B cell (primary cell): ENCODE measurements at regions of chr7 and their contacts with region 1.

Region 1: DNA sequence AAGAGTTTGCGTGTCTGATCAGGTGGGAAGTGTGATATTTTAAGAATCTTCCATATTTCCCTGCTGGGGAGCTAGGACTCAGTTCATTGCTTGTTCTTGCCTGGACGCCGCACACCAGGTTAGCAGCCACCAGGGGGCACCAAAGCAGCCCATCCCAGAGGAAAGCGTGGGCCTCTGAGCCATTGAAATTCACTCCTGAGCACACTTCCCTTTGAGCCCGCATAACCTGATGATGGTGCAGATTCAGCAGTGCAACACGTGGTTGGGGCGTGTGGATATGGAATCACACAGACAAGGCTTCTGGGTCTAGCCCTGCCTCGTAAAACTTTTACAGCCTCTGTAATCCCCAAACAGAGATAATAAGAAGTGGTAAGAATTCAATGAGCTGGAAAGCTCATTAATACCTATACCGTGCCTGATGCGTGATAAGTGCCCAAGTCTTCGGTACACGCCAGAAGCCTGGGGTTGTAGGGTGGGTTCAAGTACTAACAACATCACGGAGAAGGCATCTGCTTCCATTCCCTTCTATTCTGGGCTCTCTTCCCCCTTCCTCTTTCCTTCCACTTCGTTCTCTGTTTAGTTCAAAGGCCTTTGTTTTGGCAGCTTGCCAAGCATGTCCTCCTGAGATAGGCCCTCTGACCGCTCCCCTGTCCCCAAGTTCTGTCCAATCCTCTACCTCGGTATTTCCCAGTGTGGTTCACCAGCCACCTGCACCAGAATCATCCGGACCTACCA is 130.1 kb upstream of the KMT2E start:
- DNase-seq: peak; percentile 78
- ATAC-seq: peak; percentile 81
- H3K4me3 ChIP-seq: no peak overlapping the region
- H3K4me3 Mint-ChIP-seq: no peak overlapping the region
- H3K27ac ChIP-seq: no peak overlapping the region
- H3K27ac Mint-ChIP-seq: no peak overlapping the region
- H3K4me1 ChIP-seq: peaks cover 4 to 6% of the 10 kb centered on the region in 2 donors
- H3K4me1 Mint-ChIP-seq: peaks cover 8% of the 10 kb centered on the region
- H3K27me3 ChIP-seq: peaks cover 0 to 9% (median 2%) of the 10 kb centered on the region in 4 experiments
- H3K27me3 Mint-ChIP-seq: peaks cover 12% of the 10 kb centered on the region
- CTCF ChIP-seq: peak; percentile 95

Region 2: GRCh38 chr7:104857458-104858425 is 26.1 kb before region 1 on chr7:
- CTCF ChIA-PET with region 1: interaction called, 13 read pairs
- POLR2A ChIA-PET with region 1: no interaction called
- intact Hi-C with region 1: no loop called
- DNase-seq: no peak
- ATAC-seq: no peak
- H3K4me3 ChIP-seq: no peak overlapping the region
- H3K4me3 Mint-ChIP-seq: no peak overlapping the region
- H3K27ac ChIP-seq: no peak overlapping the region
- H3K27ac Mint-ChIP-seq: no peak overlapping the region
- H3K4me1 ChIP-seq: peaks cover 7 to 13% of the 10 kb centered on the region in 2 donors
- H3K4me1 Mint-ChIP-seq: peaks cover 16% of the 10 kb centered on the region
- H3K27me3 ChIP-seq: peaks cover 0 to 16% (median 5%) of the 10 kb centered on the region in 4 experiments
- H3K27me3 Mint-ChIP-seq: peaks cover 19% of the 10 kb centered on the region
- CTCF ChIP-seq: no peak

Region 3: DNA sequence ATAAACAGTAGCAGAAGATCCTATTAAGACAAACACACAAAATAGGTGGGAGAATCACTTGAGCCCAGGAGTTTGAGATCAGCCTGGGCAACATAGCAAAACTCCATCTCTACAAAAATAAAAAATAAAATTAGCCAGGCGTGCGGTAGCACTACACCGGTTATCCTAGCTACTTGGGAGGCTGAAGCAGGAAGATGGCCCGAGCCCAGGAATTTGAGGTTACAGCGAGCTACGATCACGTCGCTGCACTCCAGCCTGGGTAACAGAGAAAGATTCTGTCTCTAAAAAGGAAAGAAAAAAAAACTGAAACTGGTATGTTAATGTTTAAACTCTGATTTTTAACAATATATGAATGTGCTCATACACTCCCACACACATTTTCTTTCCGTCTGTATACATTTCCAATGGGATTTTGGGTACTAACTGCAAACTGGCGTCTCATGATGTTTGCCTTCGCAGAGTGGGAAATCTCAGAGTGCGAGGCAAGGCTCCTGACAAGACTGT is 10.5 kb before region 1 on chr7:
- CTCF ChIA-PET with region 1: interaction called, 27 read pairs
- POLR2A ChIA-PET with region 1: no interaction called
- intact Hi-C with region 1: no loop called
- DNase-seq: no peak
- ATAC-seq: no peak
- H3K4me3 ChIP-seq: no peak overlapping the region
- H3K4me3 Mint-ChIP-seq: no peak overlapping the region
- H3K27ac ChIP-seq: no peak overlapping the region
- H3K27ac Mint-ChIP-seq: no peak overlapping the region
- H3K4me1 ChIP-seq: no peaks in the 10 kb centered on the region
- H3K4me1 Mint-ChIP-seq: no peaks in the 10 kb centered on the region
- H3K27me3 ChIP-seq: no peaks in the 10 kb centered on the region
- H3K27me3 Mint-ChIP-seq: peaks cover 21% of the 10 kb centered on the region
- CTCF ChIP-seq: no peak

Region 4: DNA sequence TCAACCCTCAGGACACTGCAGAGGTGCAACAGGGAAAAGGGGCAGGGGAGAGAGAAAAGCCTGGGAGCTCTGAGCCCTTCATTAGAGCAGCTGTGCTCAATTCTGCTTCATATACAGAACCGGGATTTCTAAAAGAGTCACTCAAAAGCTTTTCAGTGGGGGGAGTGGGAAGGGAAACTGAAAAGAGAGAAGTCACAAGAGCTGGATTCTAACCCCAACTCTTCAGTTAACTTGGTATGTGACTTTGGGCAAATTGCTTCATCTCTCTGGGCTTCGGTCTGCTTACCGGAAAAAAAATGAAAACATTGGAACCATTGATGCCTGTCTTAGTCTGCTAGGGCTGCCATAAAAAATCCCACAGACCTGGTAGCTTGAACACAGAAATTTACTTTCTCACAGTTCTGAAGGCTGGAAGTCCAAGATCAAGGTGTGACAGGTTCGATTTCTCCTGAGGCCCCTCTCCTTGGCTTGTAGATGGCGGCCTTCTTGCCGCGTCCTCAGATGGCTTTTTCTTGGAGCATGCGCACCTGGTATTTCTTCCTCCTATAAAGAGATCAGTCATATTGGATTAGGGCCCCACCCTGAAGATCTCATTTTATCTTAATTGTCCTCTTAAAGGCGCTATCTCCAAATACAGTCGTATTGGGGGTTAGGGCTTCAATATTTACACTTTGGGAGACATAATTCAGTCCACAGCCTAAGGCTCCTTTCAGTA is 11.8 kb after region 1 on chr7:
- CTCF ChIA-PET with region 1: interaction called, 28 read pairs
- POLR2A ChIA-PET with region 1: no interaction called
- intact Hi-C with region 1: no loop called
- DNase-seq: no peak
- ATAC-seq: no peak
- H3K4me3 ChIP-seq: no peak overlapping the region
- H3K4me3 Mint-ChIP-seq: no peak overlapping the region
- H3K27ac ChIP-seq: no peak overlapping the region
- H3K27ac Mint-ChIP-seq: no peak overlapping the region
- H3K4me1 ChIP-seq: no peaks in the 10 kb centered on the region
- H3K4me1 Mint-ChIP-seq: peaks cover 1% of the 10 kb centered on the region
- H3K27me3 ChIP-seq: peaks cover 0 to 2% (median 0%) of the 10 kb centered on the region in 4 experiments
- H3K27me3 Mint-ChIP-seq: peaks cover 8% of the 10 kb centered on the region
- CTCF ChIP-seq: no peak

Region 5: GRCh38 chr7:104900525-104901239 is 16.8 kb after region 1 on chr7:
- CTCF ChIA-PET with region 1: interaction called, 28 read pairs
- POLR2A ChIA-PET with region 1: no interaction called
- intact Hi-C with region 1: no loop called
- DNase-seq: no peak
- ATAC-seq: no peak
- H3K4me3 ChIP-seq: no peak overlapping the region
- H3K4me3 Mint-ChIP-seq: no peak overlapping the region
- H3K27ac ChIP-seq: no peak overlapping the region
- H3K27ac Mint-ChIP-seq: no peak overlapping the region
- H3K4me1 ChIP-seq: no peaks in the 10 kb centered on the region
- H3K4me1 Mint-ChIP-seq: peaks cover 1% of the 10 kb centered on the region
- H3K27me3 ChIP-seq: peaks cover 0 to 9% (median 1%) of the 10 kb centered on the region in 4 experiments
- H3K27me3 Mint-ChIP-seq: peaks cover 7% of the 10 kb centered on the region
- CTCF ChIP-seq: no peak

Region 6: DNA sequence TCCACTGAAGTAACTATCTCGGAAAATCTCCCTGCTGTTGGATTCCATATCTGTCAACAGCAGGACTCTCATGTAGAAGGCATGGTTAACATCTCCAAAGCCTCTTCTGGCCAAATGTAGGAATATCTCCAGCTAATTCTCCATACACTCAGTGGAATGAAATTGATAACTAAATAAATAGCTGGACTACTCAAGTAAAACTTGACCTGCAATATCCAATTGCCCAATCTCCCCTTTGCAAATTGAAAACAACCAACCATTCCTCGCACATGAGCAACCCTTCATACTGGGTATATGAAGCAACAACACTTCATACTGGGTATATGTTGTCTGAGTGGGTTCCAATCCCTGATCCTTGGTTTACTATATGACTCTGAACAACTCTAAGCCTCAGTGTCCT is 24.8 kb after region 1 on chr7:
- CTCF ChIA-PET with region 1: interaction called, 23 read pairs
- POLR2A ChIA-PET with region 1: no interaction called
- intact Hi-C with region 1: no loop called
- DNase-seq: no peak
- ATAC-seq: no peak
- H3K4me3 ChIP-seq: no peak overlapping the region
- H3K4me3 Mint-ChIP-seq: no peak overlapping the region
- H3K27ac ChIP-seq: no peak overlapping the region
- H3K27ac Mint-ChIP-seq: no peak overlapping the region
- H3K4me1 ChIP-seq: no peaks in the 10 kb centered on the region
- H3K4me1 Mint-ChIP-seq: no peaks in the 10 kb centered on the region
- H3K27me3 ChIP-seq: peaks cover 0 to 5% (median 3%) of the 10 kb centered on the region in 4 experiments
- H3K27me3 Mint-ChIP-seq: peaks cover 12% of the 10 kb centered on the region
- CTCF ChIP-seq: no peak

Region 7: DNA sequence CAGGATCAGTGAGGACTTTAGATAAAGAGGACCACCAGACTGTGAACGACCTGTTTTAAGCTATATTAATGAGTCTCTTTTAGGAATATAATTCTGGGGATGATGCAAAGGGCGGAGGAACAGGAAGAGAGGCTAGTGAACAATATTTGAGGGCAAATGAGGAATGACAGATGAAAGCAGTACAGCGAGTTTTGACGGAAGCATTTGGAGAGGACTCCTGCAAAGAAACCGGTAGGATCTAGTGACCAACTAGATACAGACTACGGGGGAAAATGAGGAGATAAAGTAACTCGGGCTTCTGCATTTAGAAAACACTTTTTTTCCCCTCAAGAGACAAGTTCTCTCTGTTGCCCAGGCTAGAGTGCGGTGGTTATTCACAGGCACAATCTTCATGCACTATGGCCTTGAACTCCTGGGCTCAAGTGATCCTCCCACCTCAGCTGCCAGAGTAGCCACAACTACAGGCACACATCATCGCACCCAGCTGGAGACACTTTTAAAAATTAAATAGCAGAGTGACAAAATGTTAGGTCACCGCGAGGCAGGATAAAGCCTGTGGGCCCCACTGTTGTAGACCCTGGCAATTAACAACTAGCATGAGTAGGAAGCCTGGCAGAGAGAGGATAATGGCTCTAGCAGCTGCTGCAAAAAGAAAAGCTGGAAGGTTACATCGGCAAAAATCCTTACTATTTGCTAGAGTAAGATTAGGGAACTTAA is 361.7 kb after region 1 on chr7:
- CTCF ChIA-PET with region 1: no interaction called
- POLR2A ChIA-PET with region 1: no interaction called
- intact Hi-C with region 1: no loop called
- DNase-seq: no peak
- ATAC-seq: peak; percentile 45
- H3K4me3 ChIP-seq: no peak overlapping the region
- H3K4me3 Mint-ChIP-seq: no peak overlapping the region
- H3K27ac ChIP-seq: peak overlapping the region in 1 of 2 donors; percentile 43
- H3K27ac Mint-ChIP-seq: no peak overlapping the region
- H3K4me1 ChIP-seq: peaks cover 24 to 26% of the 10 kb centered on the region in 2 donors
- H3K4me1 Mint-ChIP-seq: peaks cover 33% of the 10 kb centered on the region
- H3K27me3 ChIP-seq: no peaks in the 10 kb centered on the region
- H3K27me3 Mint-ChIP-seq: no peaks in the 10 kb centered on the region
- CTCF ChIP-seq: no peak

Region 8: GRCh38 chr7:105589356-105590077 is 705.6 kb after region 1 on chr7:
- CTCF ChIA-PET with region 1: interaction called, 12 read pairs
- POLR2A ChIA-PET with region 1: no interaction called
- intact Hi-C with region 1: loop called (anchors 5 kb)
- DNase-seq: peak; percentile 66
- ATAC-seq: peak; percentile 90
- H3K4me3 ChIP-seq: no peak overlapping the region
- H3K4me3 Mint-ChIP-seq: no peak overlapping the region
- H3K27ac ChIP-seq: no peak overlapping the region
- H3K27ac Mint-ChIP-seq: peak overlapping the region; percentile 39
- H3K4me1 ChIP-seq: peaks cover 9 to 16% of the 10 kb centered on the region in 2 donors
- H3K4me1 Mint-ChIP-seq: peaks cover 30% of the 10 kb centered on the region
- H3K27me3 ChIP-seq: no peaks in the 10 kb centered on the region
- H3K27me3 Mint-ChIP-seq: no peaks in the 10 kb centered on the region
- CTCF ChIP-seq: peak; percentile 65